Right lobe of liver (tissue), 6 donors: ENCODE measurements at regions of chr19 and their contacts with region 1.

Region 1: GRCh38 chr19:32224371-32225244 is 120.8 kb upstream of the ZNF507 start:
- DNase-seq: peak; percentile 69 to 71 (median 69)
- ATAC-seq: peak; percentile 97 to 100 (median 98)
- H3K4me3 ChIP-seq: peak overlapping the region in 1 of 3 donors; percentile 24
- H3K27ac ChIP-seq: no peak overlapping the region
- H3K4me1 ChIP-seq: peaks cover 0 to 4% (median 0%) of the 10 kb centered on the region in 4 donors
- H3K27me3 ChIP-seq: peaks cover 0 to 10% of the 10 kb centered on the region in 2 donors
- CTCF ChIP-seq: peak; percentile 98 to 100 (median 100)
- POLR2A ChIP-seq: no peak

Region 2: DNA sequence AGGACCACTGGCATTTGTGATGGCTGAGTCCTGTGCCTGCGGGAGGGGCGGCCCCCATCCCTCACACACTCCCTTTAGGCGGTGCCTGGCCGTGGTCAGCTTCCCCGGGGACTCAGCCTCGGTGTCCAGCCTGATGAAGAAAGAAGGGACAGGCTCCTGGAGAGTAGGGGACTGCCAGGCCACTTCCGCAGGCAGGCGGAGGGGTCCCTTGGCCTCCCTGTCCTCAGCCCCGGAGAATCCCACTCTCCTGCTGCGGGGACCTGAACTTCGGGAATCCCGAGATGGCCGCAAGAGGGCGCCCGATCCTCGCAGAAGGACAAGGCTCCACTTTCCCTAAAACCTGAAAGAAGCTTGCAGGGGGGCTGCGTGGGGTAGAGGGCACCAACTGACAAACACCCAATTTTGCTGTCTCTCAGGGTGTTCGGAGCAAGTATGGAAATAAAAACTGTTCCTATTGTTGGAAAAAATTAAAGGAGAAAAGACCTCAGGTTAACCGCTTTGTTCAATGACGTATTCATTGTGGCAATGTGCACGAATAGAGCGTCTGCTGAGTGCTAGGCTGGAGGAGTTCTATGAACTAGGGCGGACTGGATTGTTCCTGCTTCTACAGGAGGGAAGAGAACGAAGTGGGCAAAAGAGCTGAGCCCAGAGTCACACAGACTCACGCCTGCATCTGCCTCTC is 1555.1 kb before region 1 on chr19:
- intact Hi-C with region 1: loop called in 1 of 2 experiments (anchors 10 kb)
- DNase-seq: peak; percentile 56 to 72 (median 70)
- ATAC-seq: peak in 2 of 4 donors; percentile 14 to 19
- H3K4me3 ChIP-seq: no peak overlapping the region
- H3K27ac ChIP-seq: no peak overlapping the region
- H3K4me1 ChIP-seq: peaks cover 0 to 6% (median 3%) of the 10 kb centered on the region in 4 donors
- H3K27me3 ChIP-seq: no peaks in the 10 kb centered on the region
- CTCF ChIP-seq: peak; percentile 43 to 88 (median 78)
- POLR2A ChIP-seq: no peak

Region 3: GRCh38 chr19:30784850-30785457 is 1439.7 kb before region 1 on chr19:
- intact Hi-C with region 1: loop called (anchors 10 kb)
- DNase-seq: peak; percentile 45 to 66 (median 65)
- ATAC-seq: peak; percentile 57 to 70 (median 58)
- H3K4me3 ChIP-seq: no peak overlapping the region
- H3K27ac ChIP-seq: no peak overlapping the region
- H3K4me1 ChIP-seq: no peaks in the 10 kb centered on the region
- H3K27me3 ChIP-seq: no peaks in the 10 kb centered on the region
- CTCF ChIP-seq: peak; percentile 37 to 71 (median 60)
- POLR2A ChIP-seq: no peak

Region 4: DNA sequence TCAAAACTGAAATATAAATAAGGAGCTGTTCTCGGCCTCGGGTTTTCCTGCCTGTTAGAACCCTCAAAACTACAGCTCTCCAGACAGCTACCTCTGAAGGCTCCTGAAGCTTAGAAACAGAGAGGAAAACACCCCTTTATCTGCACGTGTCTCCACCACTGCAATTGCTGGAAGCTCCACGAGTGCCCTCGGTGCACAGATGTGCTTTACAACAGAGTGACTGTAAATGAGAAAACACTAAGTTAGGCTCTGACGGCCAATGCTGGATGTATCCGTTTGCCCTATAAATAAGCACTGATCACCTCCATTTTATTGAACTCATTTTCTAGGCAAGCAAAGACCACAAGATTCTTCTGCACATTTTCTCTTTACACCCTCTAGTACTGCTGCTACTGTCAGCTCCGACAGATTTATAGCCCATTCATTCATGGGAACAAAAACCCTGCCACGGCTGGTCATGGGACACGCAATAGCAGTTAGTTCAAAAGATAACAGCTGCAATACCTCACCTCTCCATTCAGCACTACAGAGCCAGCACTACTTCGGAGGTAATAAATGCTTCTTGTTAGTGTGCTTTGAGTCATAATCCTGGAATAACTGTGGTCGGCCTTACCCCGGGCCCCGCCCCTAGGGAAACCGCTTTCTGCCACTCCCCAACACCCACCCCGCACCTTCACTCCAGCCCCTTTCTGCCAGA is 120.3 kb before region 1 on chr19:
- intact Hi-C with region 1: no loop called
- DNase-seq: no peak
- ATAC-seq: no peak
- H3K4me3 ChIP-seq: no peak overlapping the region
- H3K27ac ChIP-seq: no peak overlapping the region
- H3K4me1 ChIP-seq: no peaks in the 10 kb centered on the region
- H3K27me3 ChIP-seq: no peaks in the 10 kb centered on the region
- CTCF ChIP-seq: no peak
- POLR2A ChIP-seq: no peak

Region 5: DNA sequence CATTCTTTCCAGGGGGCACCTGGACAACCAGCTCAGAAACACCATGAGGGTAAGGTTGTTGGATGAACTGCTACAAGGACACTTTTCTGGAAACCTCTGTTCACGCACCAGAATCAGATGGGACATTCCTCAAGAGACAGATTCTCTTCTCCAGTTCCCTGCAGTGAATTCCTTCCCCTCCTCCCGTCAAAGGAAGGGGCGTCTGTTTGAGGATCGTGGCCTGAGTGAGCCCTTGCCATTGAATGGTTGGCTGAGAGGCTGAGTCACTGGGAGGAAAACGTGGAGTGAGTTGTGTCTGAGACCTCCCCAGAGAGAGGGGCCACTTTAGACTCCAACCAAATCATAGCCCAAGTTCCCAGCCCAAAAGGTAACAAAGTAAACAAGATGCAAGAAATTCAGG is 41.4 kb after region 1 on chr19:
- intact Hi-C with region 1: no loop called
- DNase-seq: no peak
- ATAC-seq: no peak
- H3K4me3 ChIP-seq: no peak overlapping the region
- H3K27ac ChIP-seq: no peak overlapping the region
- H3K4me1 ChIP-seq: no peaks in the 10 kb centered on the region
- H3K27me3 ChIP-seq: no peaks in the 10 kb centered on the region
- CTCF ChIP-seq: no peak
- POLR2A ChIP-seq: no peak

Region 6: GRCh38 chr19:32537580-32537979 is 313.0 kb after region 1 on chr19:
- intact Hi-C with region 1: no loop called
- DNase-seq: no peak
- ATAC-seq: no peak
- H3K4me3 ChIP-seq: no peak overlapping the region
- H3K27ac ChIP-seq: no peak overlapping the region
- H3K4me1 ChIP-seq: peaks cover 0 to 5% (median 0%) of the 10 kb centered on the region in 4 donors
- H3K27me3 ChIP-seq: no peaks in the 10 kb centered on the region
- CTCF ChIP-seq: no peak
- POLR2A ChIP-seq: no peak